Activated CD4-positive, alpha-beta memory T cell treated with anti-CD3 and anti-CD28 coated beads for 36 hours (primary cell): ENCODE measurements at regions of chr10 and their contacts with region 1.

Region 1: DNA sequence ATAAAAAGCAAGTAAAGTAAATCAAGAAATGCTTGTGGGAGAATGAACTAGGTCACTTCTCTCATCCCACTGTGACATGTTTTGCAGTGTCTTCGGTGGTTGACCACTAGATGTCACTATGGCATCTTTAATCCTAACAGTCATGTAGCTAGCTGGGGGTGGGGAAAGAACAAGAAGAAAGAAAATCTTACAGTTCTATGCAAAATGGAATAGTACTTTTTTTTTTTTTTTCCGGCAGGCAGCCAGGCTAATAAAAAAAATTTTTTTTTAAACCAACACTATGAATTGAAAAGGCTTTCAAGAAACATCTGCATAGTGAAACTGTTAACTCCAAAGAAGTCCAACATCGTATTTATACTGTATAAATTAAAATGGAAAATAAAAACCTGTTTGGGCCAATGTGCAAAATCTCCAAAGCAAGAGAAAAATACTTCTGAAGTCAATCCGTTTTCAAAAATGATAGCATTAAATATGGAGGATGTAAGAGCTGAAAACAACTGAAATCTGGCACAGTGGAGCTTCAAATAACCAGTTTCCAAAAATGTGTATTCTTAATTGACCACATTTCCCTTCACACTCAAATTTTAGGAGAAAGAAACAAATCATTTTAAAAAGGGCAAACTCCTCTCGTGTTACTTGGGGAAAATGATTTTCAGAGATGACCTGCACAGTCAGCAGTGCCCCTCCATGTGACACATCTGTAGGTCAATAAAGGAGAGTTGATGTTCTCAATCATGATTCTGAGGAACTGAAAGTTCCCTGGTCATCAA is 38.5 kb downstream of the CDK1 start:
- DNase-seq: peak; percentile 15
- H3K4me3 Mint-ChIP-seq: no peak overlapping the region
- H3K27ac Mint-ChIP-seq: no peak overlapping the region
- H3K4me1 Mint-ChIP-seq: peaks cover 3% of the 10 kb centered on the region
- H3K27me3 Mint-ChIP-seq: no peaks in the 10 kb centered on the region

Region 2: GRCh38 chr10:60521974-60522405 is 294.8 kb before region 1 on chr10:
- CTCF ChIA-PET with region 1: no interaction called
- POLR2A ChIA-PET with region 1: no interaction called
- intact Hi-C with region 1: no loop called
- DNase-seq: peak; percentile 13
- H3K4me3 Mint-ChIP-seq: no peak overlapping the region
- H3K27ac Mint-ChIP-seq: no peak overlapping the region
- H3K4me1 Mint-ChIP-seq: peaks cover 17% of the 10 kb centered on the region
- H3K27me3 Mint-ChIP-seq: no peaks in the 10 kb centered on the region

Region 3: GRCh38 chr10:60964257-60965235 is 147.7 kb after region 1 on chr10:
- CTCF ChIA-PET with region 1: interaction called, 8 read pairs
- POLR2A ChIA-PET with region 1: interaction called, 5 read pairs
- intact Hi-C with region 1: loop called (anchors 1 kb)
- DNase-seq: peak; percentile 57
- H3K4me3 Mint-ChIP-seq: no peak overlapping the region
- H3K27ac Mint-ChIP-seq: no peak overlapping the region
- H3K4me1 Mint-ChIP-seq: peaks cover 17% of the 10 kb centered on the region
- H3K27me3 Mint-ChIP-seq: peaks cover 18% of the 10 kb centered on the region

Region 4: GRCh38 chr10:61140765-61141392 is 324.1 kb after region 1 on chr10:
- CTCF ChIA-PET with region 1: interaction called, 3 read pairs
- POLR2A ChIA-PET with region 1: no interaction called
- intact Hi-C with region 1: loop called (anchors 2 kb)
- DNase-seq: no peak
- H3K4me3 Mint-ChIP-seq: no peak overlapping the region
- H3K27ac Mint-ChIP-seq: no peak overlapping the region
- H3K4me1 Mint-ChIP-seq: no peaks in the 10 kb centered on the region
- H3K27me3 Mint-ChIP-seq: peaks cover 1% of the 10 kb centered on the region

Region 5: DNA sequence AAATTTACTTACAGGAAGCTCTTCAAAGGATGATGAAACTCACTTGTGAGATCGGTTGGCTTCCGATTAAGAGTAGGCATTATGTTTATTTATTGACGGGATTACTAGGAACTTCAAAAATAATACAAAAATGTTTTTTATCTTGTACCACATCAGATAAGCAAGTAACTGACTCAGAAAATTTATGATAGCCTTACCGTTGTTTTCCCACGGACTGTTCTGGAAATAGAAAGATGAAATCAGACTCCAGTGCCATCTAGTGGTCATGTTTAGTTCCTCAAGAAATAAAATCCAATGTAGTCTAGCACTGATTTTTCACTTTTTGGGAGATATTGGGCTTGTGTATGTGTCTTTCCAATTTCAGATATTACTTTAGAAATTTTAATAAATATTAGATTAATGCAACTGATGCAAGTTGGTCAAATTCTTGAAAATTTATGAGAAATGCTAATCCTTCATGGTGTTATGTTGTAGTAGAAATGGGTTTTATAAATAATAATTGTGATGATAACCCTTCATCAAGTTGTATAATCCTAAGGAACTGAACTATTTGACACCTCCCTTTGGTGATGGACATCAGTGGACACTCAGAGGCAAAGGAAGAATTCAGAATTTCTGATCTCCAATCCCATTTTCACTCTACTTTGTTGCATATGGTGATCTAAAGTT is 467.5 kb after region 1 on chr10:
- CTCF ChIA-PET with region 1: interaction called, 7 read pairs
- POLR2A ChIA-PET with region 1: no interaction called
- intact Hi-C with region 1: loop called (anchors 1 kb)
- DNase-seq: no peak
- H3K4me3 Mint-ChIP-seq: peak overlapping the region; percentile 27
- H3K27ac Mint-ChIP-seq: no peak overlapping the region
- H3K4me1 Mint-ChIP-seq: peaks cover 18% of the 10 kb centered on the region
- H3K27me3 Mint-ChIP-seq: peaks cover 2% of the 10 kb centered on the region

Region 6: GRCh38 chr10:61529208-61529607 is 712.4 kb after region 1 on chr10:
- CTCF ChIA-PET with region 1: no interaction called
- POLR2A ChIA-PET with region 1: no interaction called
- intact Hi-C with region 1: no loop called
- DNase-seq: no peak
- H3K4me3 Mint-ChIP-seq: no peak overlapping the region
- H3K27ac Mint-ChIP-seq: no peak overlapping the region
- H3K4me1 Mint-ChIP-seq: no peaks in the 10 kb centered on the region
- H3K27me3 Mint-ChIP-seq: peaks cover 6% of the 10 kb centered on the region

Region 7: GRCh38 chr10:61835069-61835945 is 1018.5 kb after region 1 on chr10:
- CTCF ChIA-PET with region 1: no interaction called
- POLR2A ChIA-PET with region 1: no interaction called
- intact Hi-C with region 1: loop called (anchors 10 kb)
- DNase-seq: no peak
- H3K4me3 Mint-ChIP-seq: no peak overlapping the region
- H3K27ac Mint-ChIP-seq: no peak overlapping the region
- H3K4me1 Mint-ChIP-seq: peaks cover 23% of the 10 kb centered on the region
- H3K27me3 Mint-ChIP-seq: no peaks in the 10 kb centered on the region